AG04450 (cell line): ENCODE measurements at regions of chr14 and their contacts with region 1.

Region 1: GRCh38 chr14:105045710-105046326 is 19.4 kb downstream of the GPR132 start:
- DNase-seq: peak; percentile 44
- H3K4me3 ChIP-seq: no peak overlapping the region
- H3K27ac ChIP-seq: no peak overlapping the region
- H3K27me3 ChIP-seq: peaks cover 13% of the 10 kb centered on the region
- CTCF ChIP-seq: peak; percentile 99

Region 2: GRCh38 chr14:104895786-104896661 is 149.8 kb before region 1 on chr14:
- CTCF ChIA-PET with region 1: interaction called, 62 read pairs
- POLR2A ChIA-PET with region 1: no interaction called
- DNase-seq: no peak
- H3K4me3 ChIP-seq: no peak overlapping the region
- H3K27ac ChIP-seq: no peak overlapping the region
- H3K27me3 ChIP-seq: peaks cover 3% of the 10 kb centered on the region
- CTCF ChIP-seq: no peak

Region 3: DNA sequence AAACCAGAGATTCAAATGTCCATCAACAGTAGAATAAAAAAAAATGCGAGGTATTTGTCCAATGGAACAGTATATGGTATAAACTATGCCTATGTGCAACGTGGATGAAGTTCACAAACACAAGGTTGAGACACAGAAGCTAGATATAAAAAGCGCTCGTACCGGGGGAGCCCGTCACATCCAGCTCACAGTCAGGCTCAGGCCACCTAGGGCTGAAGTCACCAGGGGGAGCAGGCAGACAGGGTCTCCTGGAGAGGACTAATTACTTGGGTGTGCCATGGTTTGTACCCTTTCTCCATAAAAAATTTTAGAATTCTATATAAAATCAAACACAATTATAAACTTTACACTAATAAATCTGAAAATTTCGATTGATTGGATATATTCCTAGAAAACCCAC is 81.3 kb before region 1 on chr14:
- CTCF ChIA-PET with region 1: interaction called, 10 read pairs
- POLR2A ChIA-PET with region 1: no interaction called
- DNase-seq: no peak
- H3K4me3 ChIP-seq: no peak overlapping the region
- H3K27ac ChIP-seq: no peak overlapping the region
- H3K27me3 ChIP-seq: no peaks in the 10 kb centered on the region
- CTCF ChIP-seq: no peak

Region 4: GRCh38 chr14:104985675-104986525 is 59.9 kb before region 1 on chr14 and contains the start of gene CLBA1:
- CTCF ChIA-PET with region 1: interaction called, 15 read pairs
- POLR2A ChIA-PET with region 1: interaction called, 3 read pairs
- DNase-seq: peak; percentile 70
- H3K4me3 ChIP-seq: peak within 1 kb of the TSS; percentile 69
- H3K27ac ChIP-seq: no peak within 1 kb of the TSS
- H3K27me3 ChIP-seq: peaks cover 2% of the 10 kb centered on the region
- CTCF ChIP-seq: no peak
- polyA plus RNA-seq, gene CLBA1: 4.6 and 4.9 TPM in 2 replicates

Region 5: GRCh38 chr14:105020815-105021655 is 24.8 kb before region 1 on chr14 and contains the start of gene CDCA4:
- CTCF ChIA-PET with region 1: interaction called, 10 read pairs
- POLR2A ChIA-PET with region 1: interaction called, 5 read pairs
- DNase-seq: peak; percentile 81
- H3K4me3 ChIP-seq: peak within 1 kb of the TSS; percentile 82
- H3K27ac ChIP-seq: peak within 1 kb of the TSS; percentile 82
- H3K27me3 ChIP-seq: no peaks in the 10 kb centered on the region
- CTCF ChIP-seq: no peak
- polyA plus RNA-seq, gene CDCA4: 6.8 and 7.8 TPM in 2 replicates

Region 6: GRCh38 chr14:105059035-105059924 is 13.5 kb after region 1 on chr14:
- CTCF ChIA-PET with region 1: interaction called, 23 read pairs
- POLR2A ChIA-PET with region 1: no interaction called
- DNase-seq: no peak
- H3K4me3 ChIP-seq: no peak overlapping the region
- H3K27ac ChIP-seq: no peak overlapping the region
- H3K27me3 ChIP-seq: peaks cover 13% of the 10 kb centered on the region
- CTCF ChIP-seq: no peak

Region 7: GRCh38 chr14:105075379-105076295 is 29.8 kb after region 1 on chr14:
- CTCF ChIA-PET with region 1: no interaction called
- POLR2A ChIA-PET with region 1: no interaction called
- DNase-seq: no peak
- H3K4me3 ChIP-seq: no peak overlapping the region
- H3K27ac ChIP-seq: no peak overlapping the region
- H3K27me3 ChIP-seq: peaks cover 18% of the 10 kb centered on the region
- CTCF ChIP-seq: no peak